ENCODE measurements at regions of chr7 and their contacts with region 1.

Region 1: GRCh38 chr7:67788669-67789068 is 792.0 kb downstream of the TYW1 start:
- DNase-seq: peak; percentile 49
- H3K4me3 ChIP-seq: no peak overlapping the region
- H3K27ac ChIP-seq: no peak overlapping the region
- H3K4me1 ChIP-seq: no peaks in the 10 kb centered on the region
- H3K27me3 ChIP-seq: no peaks in the 10 kb centered on the region
- CTCF ChIP-seq: peak; percentile 73

Region 2: GRCh38 chr7:66265566-66265965 is 1523.1 kb before region 1 on chr7:
- CTCF ChIA-PET with region 1: no interaction called
- POLR2A ChIA-PET with region 1: no interaction called
- intact Hi-C with region 1: no loop called
- DNase-seq: peak; percentile 21
- H3K4me3 ChIP-seq: no peak overlapping the region
- H3K27ac ChIP-seq: no peak overlapping the region
- H3K4me1 ChIP-seq: no peaks in the 10 kb centered on the region
- H3K27me3 ChIP-seq: no peaks in the 10 kb centered on the region
- CTCF ChIP-seq: no peak

Region 3: GRCh38 chr7:67371429-67372305 is 417.0 kb before region 1 on chr7:
- CTCF ChIA-PET with region 1: no interaction called
- POLR2A ChIA-PET with region 1: no interaction called
- intact Hi-C with region 1: loop called (anchors 10 kb)
- DNase-seq: peak; percentile 85
- H3K4me3 ChIP-seq: no peak overlapping the region
- H3K27ac ChIP-seq: no peak overlapping the region
- H3K4me1 ChIP-seq: no peaks in the 10 kb centered on the region
- H3K27me3 ChIP-seq: peaks cover 2% of the 10 kb centered on the region
- CTCF ChIP-seq: peak; percentile 87

Region 4: GRCh38 chr7:68058014-68058413 is 269.3 kb after region 1 on chr7:
- CTCF ChIA-PET with region 1: no interaction called
- POLR2A ChIA-PET with region 1: no interaction called
- intact Hi-C with region 1: no loop called
- DNase-seq: no peak
- H3K4me3 ChIP-seq: no peak overlapping the region
- H3K27ac ChIP-seq: no peak overlapping the region
- H3K4me1 ChIP-seq: no peaks in the 10 kb centered on the region
- H3K27me3 ChIP-seq: no peaks in the 10 kb centered on the region
- CTCF ChIP-seq: no peak

Region 5: DNA sequence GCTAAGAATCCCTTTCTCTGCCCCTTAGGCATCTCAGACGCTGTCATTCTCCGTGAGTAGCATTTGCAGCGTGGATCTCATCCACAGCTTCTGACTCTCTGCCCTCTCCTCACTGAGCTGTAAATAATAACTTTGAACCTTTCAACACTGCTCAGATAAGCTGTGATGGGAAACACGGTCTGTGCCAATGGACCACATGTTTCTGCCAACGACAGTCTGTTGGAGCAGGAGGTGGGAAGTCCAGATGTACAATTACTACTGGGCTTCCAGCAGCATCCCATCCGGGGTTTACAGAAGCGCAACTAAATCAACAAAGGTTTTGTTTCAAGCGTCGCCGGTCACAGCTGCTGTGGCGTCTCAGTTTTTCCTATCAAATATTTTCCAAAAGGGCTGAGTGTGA is 318.6 kb after region 1 on chr7:
- CTCF ChIA-PET with region 1: no interaction called
- POLR2A ChIA-PET with region 1: no interaction called
- intact Hi-C with region 1: no loop called
- DNase-seq: no peak
- H3K4me3 ChIP-seq: no peak overlapping the region
- H3K27ac ChIP-seq: no peak overlapping the region
- H3K4me1 ChIP-seq: no peaks in the 10 kb centered on the region
- H3K27me3 ChIP-seq: no peaks in the 10 kb centered on the region
- CTCF ChIP-seq: no peak

Region 6: DNA sequence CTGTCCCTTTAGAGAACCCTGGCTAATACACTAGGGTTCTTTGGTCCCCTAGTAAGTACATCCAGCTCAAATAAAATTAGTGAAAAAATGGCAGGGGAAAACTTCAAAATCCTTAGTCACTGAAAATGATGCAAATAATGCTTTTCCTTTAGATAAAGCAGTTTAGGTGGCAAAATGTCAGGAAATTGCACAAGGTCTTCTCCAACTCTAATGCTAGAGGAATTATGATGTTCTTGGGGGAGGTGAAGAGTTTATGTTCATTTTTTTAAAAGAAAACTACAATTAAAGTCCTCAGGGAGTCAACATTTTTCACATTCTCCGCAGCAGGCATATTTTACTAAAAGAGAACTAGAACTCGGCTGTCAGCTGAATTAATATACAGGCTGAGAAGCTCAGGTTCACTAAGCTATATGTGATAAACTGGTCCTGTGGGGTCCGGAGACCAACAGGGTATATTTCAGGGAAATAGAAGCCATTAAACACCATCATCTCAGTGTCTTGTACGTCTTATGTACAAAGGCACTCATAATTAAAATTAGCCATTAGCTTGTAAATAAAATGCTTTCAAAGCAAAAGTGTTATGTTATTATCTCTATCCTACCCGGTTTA is 644.9 kb after region 1 on chr7:
- CTCF ChIA-PET with region 1: no interaction called
- POLR2A ChIA-PET with region 1: no interaction called
- intact Hi-C with region 1: no loop called
- DNase-seq: peak; percentile 45
- H3K4me3 ChIP-seq: no peak overlapping the region
- H3K27ac ChIP-seq: no peak overlapping the region
- H3K4me1 ChIP-seq: peaks cover 9% of the 10 kb centered on the region
- H3K27me3 ChIP-seq: no peaks in the 10 kb centered on the region
- CTCF ChIP-seq: no peak

Measured in A673 (cell line).